ENCODE measurements at regions of chr12 and their contacts with region 1.

Region 1: GRCh38 chr12:55659486-55660385 is 23.0 kb downstream of the OR10P1 start:
- DNase-seq: peak; percentile 47
- ATAC-seq: no peak
- H3K4me3 Mint-ChIP-seq: no peak overlapping the region
- H3K27ac Mint-ChIP-seq: no peak overlapping the region
- H3K4me1 Mint-ChIP-seq: no peaks in the 10 kb centered on the region
- H3K27me3 Mint-ChIP-seq: peaks cover 1% of the 10 kb centered on the region
- CTCF ChIP-seq: peak; percentile 34

Region 2: DNA sequence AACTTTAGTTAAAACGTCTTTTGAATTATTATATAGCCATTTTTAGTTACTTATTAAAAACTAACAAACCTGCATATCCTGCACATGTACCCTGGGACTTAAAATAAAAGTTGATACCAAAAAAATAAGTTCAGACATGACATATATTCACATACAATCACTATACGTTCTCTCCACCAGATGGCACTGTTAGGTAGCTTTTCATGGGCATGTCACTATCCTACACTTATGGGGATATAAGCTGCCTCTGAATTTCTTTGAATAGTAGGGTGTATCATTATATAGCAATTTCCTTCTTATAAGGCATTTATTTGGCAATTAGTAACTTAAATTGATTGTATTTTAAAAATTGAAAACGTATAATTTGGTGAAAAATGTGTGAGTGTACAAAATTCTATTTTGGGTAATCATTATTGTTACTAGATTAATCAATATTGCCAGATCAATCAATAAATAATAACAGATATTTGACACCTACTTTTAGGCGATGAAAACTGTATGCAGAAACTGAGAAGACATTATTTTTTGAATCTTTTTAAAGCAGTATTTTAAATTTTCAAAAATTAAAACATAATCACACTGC is 470.7 kb before region 1 on chr12:
- CTCF ChIA-PET with region 1: interaction called, 25 read pairs
- POLR2A ChIA-PET with region 1: interaction called, 5 read pairs
- intact Hi-C with region 1: no loop called
- DNase-seq: peak; percentile 62
- ATAC-seq: peak; percentile 74
- H3K4me3 Mint-ChIP-seq: no peak overlapping the region
- H3K27ac Mint-ChIP-seq: no peak overlapping the region
- H3K4me1 Mint-ChIP-seq: no peaks in the 10 kb centered on the region
- H3K27me3 Mint-ChIP-seq: peaks cover 27% of the 10 kb centered on the region
- CTCF ChIP-seq: peak; percentile 84

Region 3: DNA sequence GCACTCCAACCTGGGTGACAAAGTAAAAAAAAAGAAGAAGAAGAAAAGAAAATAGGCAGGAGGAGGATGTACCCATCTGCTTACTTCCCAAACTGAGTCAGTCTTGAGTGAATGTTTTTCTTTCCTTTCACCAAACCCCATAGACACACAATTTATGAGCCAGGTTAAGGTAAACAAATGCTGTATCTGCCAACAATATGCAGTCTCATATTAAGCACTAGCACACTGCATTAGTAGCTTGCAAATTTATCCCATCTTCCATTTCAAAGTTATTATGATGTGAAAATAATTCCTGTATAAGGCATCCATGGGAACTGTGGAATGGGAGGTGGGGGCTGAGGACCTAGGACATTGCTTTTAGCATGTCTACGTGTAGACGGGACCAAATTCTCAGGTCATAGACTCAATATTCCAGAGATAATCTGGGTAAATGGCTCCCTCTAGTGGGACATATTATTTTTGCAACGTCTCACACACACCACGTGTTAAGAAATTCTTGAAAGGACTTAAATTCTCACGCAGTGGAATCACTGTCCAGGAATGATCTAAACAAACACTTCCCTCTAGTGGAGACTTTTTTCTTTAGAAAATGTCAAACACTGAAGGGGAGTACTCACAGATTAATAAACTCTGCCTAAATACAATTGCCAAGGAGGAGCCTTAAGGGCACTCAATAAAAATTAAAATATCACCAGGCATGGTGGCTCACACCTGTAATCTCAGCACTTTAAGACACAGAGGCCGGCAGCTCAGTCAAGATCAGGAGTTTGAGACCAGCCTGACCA is 40.2 kb before region 1 on chr12:
- CTCF ChIA-PET with region 1: interaction called, 30 read pairs
- POLR2A ChIA-PET with region 1: interaction called, 4 read pairs
- intact Hi-C with region 1: no loop called
- DNase-seq: peak; percentile 46
- ATAC-seq: peak; percentile 68
- H3K4me3 Mint-ChIP-seq: no peak overlapping the region
- H3K27ac Mint-ChIP-seq: no peak overlapping the region
- H3K4me1 Mint-ChIP-seq: peaks cover 8% of the 10 kb centered on the region
- H3K27me3 Mint-ChIP-seq: peaks cover 22% of the 10 kb centered on the region
- CTCF ChIP-seq: peak; percentile 86

Region 4: GRCh38 chr12:55642669-55643068 is 17.1 kb before region 1 on chr12:
- CTCF ChIA-PET with region 1: interaction called, 99 read pairs
- POLR2A ChIA-PET with region 1: interaction called, 3 read pairs
- intact Hi-C with region 1: no loop called
- DNase-seq: peak; percentile 68
- ATAC-seq: peak; percentile 35
- H3K4me3 Mint-ChIP-seq: no peak overlapping the region
- H3K27ac Mint-ChIP-seq: no peak overlapping the region
- H3K4me1 Mint-ChIP-seq: peaks cover 26% of the 10 kb centered on the region
- H3K27me3 Mint-ChIP-seq: peaks cover 2% of the 10 kb centered on the region
- CTCF ChIP-seq: no peak

Region 5: DNA sequence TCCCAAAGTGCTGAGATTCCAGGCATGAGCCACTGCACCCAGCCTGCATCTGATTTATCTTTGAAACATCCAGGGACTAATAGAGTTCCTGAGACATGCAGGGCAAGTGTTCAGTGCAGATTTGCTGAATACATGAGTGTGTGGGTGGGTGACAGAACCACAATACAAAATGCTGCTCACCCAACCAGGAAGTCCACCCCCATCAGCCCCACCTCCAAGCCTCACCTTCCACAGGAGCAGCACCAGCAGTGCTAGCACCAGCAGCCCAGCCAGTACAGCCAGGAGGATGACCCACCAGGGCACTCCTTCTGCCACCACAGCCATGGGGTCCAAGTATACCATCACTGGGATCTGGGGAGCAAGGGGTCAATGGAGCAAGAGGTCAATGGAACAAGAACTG is 28.0 kb after region 1 on chr12:
- CTCF ChIA-PET with region 1: interaction called, 14 read pairs
- POLR2A ChIA-PET with region 1: no interaction called
- intact Hi-C with region 1: no loop called
- DNase-seq: peak; percentile 82
- ATAC-seq: peak; percentile 99
- H3K4me3 Mint-ChIP-seq: no peak overlapping the region
- H3K27ac Mint-ChIP-seq: no peak overlapping the region
- H3K4me1 Mint-ChIP-seq: peaks cover 7% of the 10 kb centered on the region
- H3K27me3 Mint-ChIP-seq: peaks cover under 1% of the 10 kb centered on the region
- CTCF ChIP-seq: no peak

Region 6: DNA sequence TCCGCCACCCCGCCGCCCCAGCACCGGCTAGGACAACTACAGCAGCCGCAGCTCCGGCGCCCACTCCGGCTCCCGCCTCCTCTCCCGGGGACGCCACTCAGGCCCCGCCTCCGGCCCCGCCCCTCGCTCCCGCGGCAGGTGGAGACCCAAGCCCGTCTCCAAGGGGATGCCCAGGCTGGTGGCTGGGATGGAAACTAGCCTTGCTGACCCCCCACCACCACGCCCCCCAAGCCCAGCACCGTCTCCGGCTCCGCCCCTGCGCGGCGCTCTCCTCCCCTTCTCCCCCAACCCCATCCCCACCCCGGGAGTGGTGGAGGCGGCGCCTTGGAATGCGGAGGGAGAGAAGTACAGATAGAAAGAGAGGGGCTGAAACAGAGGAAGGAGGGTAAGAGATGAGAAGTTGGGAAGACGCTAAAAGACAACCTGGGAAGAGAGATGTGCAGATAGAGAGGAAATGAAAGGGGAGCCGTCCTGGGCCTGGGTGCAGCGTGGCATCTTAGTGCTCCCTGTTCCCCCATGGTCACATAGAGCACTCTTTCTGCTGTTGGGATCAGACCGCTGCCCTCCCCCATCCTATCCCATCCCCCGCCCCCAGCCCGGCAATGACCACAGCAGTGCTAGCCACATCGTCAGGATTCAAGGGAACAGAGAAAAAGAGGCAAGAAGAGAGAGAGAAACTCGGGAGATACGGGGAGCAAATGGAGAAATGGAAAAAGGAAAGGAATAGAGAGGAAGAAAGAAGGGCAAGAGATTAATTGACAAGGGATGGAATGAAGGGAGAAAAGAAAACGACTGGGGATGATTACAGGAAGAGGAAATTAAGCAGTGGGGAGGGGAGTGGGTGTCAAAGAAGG is 48.3 kb after region 1 on chr12 and contains the start of gene ITGA7:
- CTCF ChIA-PET with region 1: interaction called, 12 read pairs
- POLR2A ChIA-PET with region 1: interaction called, 3 read pairs
- intact Hi-C with region 1: no loop called
- DNase-seq: peak; percentile 60
- ATAC-seq: peak; percentile 85
- H3K4me3 Mint-ChIP-seq: peak within 1 kb of the TSS; percentile 73
- H3K27ac Mint-ChIP-seq: no peak within 1 kb of the TSS
- H3K4me1 Mint-ChIP-seq: peaks cover 12% of the 10 kb centered on the region
- H3K27me3 Mint-ChIP-seq: peaks cover 22% of the 10 kb centered on the region
- CTCF ChIP-seq: no peak
- total RNA-seq, gene ITGA7: 4.3 to 4.8 TPM

Measured in activated CD8-positive, alpha-beta T cell treated with anti-CD3 and anti-CD28 coated beads for 36 hours (primary cell).